Ascending aorta (tissue), 2 donors: ENCODE measurements at regions of chr4 and their contacts with region 1.

Region 1: GRCh38 chr4:2536193-2537010 is at the start of gene FAM193A:
- DNase-seq: peak; percentile 98 to 100
- H3K4me3 ChIP-seq: peak within 1 kb of the TSS; percentile 97 to 100
- H3K27ac ChIP-seq: peak within 1 kb of the TSS; percentile 89 to 97
- H3K4me1 ChIP-seq: peaks cover 15 to 16% of the 10 kb centered on the region in 2 donors
- H3K27me3 ChIP-seq: no peaks in the 10 kb centered on the region
- CTCF ChIP-seq: no peak
- total RNA-seq, gene FAM193A: 30.9 TPM

Region 2: GRCh38 chr4:1856042-1856788 is 680.2 kb before region 1 on chr4 and contains the start of gene LETM1:
- intact Hi-C with region 1: loop called (anchors 10 kb)
- DNase-seq: peak; percentile 86 to 97
- H3K4me3 ChIP-seq: peak within 1 kb of the TSS; percentile 85 to 86
- H3K27ac ChIP-seq: peak within 1 kb of the TSS; percentile 78 to 82
- H3K4me1 ChIP-seq: peaks cover 0 to 10% of the 10 kb centered on the region in 2 donors
- H3K27me3 ChIP-seq: no peaks in the 10 kb centered on the region
- CTCF ChIP-seq: peak in 1 of 3 experiments; percentile 28
- total RNA-seq, gene LETM1: 37.7 TPM

Region 3: DNA sequence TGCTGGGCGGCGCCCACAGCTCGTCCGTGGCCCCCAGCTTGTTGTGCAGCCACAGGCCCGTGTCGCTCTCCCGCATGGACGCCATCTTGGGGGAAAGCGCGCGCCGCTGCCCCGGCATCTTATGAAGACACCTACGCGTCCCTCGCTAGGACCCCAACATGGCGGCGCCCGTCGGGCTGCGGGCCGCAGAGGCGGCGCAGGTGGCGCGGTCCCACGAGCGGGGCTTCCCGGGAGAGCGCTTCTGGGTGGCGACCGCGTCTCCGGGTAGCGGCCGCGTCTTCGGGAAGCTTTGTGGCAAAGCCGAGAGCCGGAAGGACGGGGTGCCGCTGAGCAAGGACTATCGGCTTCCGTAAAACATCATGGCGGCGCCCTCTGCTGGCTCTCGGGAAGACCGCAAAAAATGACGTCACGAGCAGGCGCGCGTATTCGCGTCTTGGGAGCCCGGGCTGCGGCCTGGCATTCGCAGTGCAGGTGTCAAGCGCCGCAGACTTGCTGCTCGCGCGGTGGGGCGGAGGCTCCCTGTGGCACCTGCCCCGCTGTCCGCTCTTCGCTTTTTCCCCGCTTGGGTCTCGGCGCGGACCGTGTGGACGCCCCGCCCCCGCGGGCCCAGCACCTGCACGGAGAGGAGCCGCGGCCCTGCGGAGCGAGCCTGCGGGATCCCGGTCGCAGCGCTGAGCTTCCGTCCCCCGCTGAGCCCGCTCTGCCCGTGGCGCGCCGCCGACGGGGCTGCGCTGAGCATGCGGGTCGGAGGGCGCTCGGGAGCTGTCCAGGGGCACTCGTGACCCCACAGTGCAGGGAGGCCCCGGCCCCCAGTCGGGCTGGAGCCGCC is 527.3 kb before region 1 on chr4 and contains the start of gene NELFA:
- intact Hi-C with region 1: loop called (anchors 5 kb)
- DNase-seq: peak; percentile 63 to 96
- H3K4me3 ChIP-seq: peak within 1 kb of the TSS; percentile 84 to 98
- H3K27ac ChIP-seq: peak within 1 kb of the TSS; percentile 96 to 98
- H3K4me1 ChIP-seq: peaks cover 0 to 2% of the 10 kb centered on the region in 2 donors
- H3K27me3 ChIP-seq: no peaks in the 10 kb centered on the region
- CTCF ChIP-seq: peak in 2 of 3 experiments; percentile 44 to 54
- total RNA-seq, gene NELFA: 11.9 TPM

Region 4: DNA sequence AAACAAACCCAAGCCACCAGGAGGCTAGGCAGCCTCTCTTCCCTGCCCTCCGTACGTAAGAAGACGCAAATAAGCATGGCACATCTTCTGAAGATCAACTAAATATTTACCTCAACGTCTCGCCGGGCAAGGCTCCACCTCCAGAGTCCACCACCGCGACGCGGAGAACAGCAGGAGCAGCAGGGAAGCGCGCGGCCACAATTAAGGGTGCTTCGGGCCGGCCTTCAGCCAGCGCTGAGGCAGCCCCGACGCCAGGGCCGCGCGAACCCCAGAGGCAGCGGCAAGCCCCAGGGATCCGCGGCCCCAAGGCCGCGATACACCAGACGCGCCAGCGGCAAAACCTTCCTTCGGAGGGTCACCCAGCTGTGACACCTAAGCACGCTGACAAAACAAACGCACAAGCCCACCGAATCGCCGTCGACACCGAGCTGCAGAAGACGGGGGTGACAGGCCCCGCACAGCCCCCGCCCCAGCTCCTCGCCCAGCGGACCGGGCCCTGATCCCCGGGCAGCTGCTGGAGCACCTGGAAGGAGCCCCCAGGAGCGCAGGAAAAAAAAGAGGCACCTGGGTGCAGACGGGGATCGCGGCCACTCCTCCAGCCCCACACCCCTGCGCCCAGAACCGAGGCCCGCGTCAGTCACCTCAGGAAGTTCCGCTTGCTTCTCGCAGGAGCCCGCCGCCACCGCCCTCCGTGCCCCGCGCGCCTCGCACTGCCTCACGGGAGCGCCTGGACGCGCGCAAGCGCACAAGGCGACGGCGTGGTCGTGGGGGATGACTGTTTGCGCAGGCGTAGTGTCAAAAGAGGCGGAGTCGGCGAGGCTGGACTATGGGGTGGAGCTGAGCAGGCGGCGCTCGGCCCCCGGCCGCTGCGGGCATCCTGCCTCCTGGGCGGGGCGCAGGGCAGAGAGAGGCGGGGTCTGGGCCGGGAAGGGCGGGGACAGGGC is 294.7 kb before region 1 on chr4 and contains the starts of genes HAUS3 and POLN:
- intact Hi-C with region 1: loop called (anchors 5 kb)
- DNase-seq: peak; percentile 90 to 99
- H3K4me3 ChIP-seq: peak within 1 kb of the TSS; percentile 65 to 97
- H3K27ac ChIP-seq: peak within 1 kb of the TSS; percentile 60 to 69
- H3K4me1 ChIP-seq: peaks cover 6 to 37% of the 10 kb centered on the region in 2 donors
- H3K27me3 ChIP-seq: no peaks in the 10 kb centered on the region
- CTCF ChIP-seq: no peak
- total RNA-seq, gene HAUS3: 9.0 TPM
- total RNA-seq, gene POLN: 0.21 TPM

Region 5: DNA sequence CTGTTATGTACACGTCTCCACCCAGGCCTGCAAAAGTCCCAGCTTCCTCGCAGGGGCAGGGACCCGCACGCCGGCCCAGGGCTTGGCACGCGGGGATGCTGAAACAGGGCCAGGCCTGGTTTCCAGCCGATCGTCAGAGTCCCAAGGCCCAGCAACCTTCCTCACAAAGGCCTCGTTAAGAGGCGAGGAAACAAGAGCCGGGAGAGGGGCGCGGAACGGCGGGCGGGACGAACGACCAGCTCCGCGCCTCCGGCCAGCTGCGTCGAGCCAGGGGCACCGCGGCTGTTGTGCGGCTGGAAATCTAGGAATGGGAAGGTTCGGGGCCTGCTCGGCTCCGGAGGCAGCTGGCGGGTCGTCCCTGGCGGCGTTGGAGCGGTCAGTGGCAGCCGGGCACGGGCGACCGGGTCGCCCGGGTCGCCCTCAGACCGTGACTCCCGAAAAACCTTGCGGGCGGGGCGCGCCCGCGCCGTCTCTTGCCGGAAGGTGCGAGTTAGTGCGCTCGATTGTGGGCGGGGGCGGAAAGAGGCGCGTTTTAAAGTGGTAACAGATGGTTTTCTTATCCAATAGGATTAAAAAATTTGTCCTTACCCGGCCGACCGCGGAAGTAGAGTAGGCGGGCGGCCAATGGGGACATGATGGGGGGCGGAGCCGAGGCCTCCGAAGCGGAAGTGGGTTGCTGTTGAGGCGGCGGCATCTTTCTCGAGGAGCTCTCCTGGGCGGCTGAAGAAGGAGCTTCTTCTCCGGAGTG is 67.8 kb before region 1 on chr4 and contains the start of gene RNF4:
- intact Hi-C with region 1: loop called (anchors 1 kb)
- DNase-seq: peak; percentile 86 to 98
- H3K4me3 ChIP-seq: peak within 1 kb of the TSS; percentile 84 to 95
- H3K27ac ChIP-seq: peak within 1 kb of the TSS; percentile 81 to 91
- H3K4me1 ChIP-seq: peaks cover 3 to 18% of the 10 kb centered on the region in 2 donors
- H3K27me3 ChIP-seq: no peaks in the 10 kb centered on the region
- CTCF ChIP-seq: no peak
- total RNA-seq, gene RNF4: 19.3 TPM

Region 6: DNA sequence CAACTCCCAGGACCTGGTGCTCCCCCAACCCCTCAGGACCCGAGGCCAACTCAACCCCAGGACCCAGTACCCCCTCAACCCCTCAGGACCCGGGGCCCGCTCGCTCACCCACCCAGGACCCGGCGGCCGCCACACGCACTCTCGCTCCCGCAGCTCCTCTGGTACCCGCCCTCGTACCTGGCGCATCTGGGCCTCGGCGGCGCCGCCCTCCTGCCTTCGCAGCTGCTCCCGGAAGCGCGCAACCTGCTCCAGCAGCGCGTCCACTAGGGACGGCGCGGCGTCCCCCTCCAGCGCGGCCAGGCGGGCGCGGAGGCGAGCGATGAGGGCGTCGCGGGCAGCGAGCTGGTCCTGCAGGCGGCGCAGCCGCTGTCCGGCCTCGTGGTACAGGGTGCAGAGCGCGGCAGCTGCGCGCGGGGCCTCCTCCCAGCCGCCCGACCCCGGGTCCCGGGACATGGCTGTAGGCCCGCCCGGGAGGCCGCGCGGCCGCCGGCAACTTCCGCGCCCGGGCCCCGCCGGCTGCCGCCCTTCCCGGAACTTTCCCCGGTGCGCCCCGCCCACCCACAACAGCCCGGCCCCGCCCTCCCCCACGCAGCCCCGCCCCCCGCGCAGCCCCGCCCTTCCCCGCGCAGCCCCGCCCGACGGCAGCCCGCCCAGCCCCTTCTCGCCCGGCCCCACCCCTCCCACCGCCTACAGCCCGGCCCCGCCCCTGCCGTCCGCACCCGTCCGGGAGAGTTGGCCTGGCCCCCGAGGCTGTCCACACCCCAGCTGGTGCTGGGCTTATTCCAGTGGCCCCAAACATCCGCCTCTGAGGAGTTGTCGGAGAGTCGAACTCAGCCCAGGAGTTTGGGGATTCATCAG is 219.7 kb after region 1 on chr4 and contains the start of gene TNIP2:
- intact Hi-C with region 1: loop called (anchors 5 kb)
- DNase-seq: peak in 1 of 2 donors; percentile 92
- H3K4me3 ChIP-seq: peak within 1 kb of the TSS; percentile 90 to 95
- H3K27ac ChIP-seq: peak within 1 kb of the TSS; percentile 82 to 87
- H3K4me1 ChIP-seq: peaks cover 4 to 10% of the 10 kb centered on the region in 2 donors
- H3K27me3 ChIP-seq: no peaks in the 10 kb centered on the region
- CTCF ChIP-seq: peak; percentile 11 to 59 (median 28)
- total RNA-seq, gene TNIP2: 65.6 TPM

Region 7: DNA sequence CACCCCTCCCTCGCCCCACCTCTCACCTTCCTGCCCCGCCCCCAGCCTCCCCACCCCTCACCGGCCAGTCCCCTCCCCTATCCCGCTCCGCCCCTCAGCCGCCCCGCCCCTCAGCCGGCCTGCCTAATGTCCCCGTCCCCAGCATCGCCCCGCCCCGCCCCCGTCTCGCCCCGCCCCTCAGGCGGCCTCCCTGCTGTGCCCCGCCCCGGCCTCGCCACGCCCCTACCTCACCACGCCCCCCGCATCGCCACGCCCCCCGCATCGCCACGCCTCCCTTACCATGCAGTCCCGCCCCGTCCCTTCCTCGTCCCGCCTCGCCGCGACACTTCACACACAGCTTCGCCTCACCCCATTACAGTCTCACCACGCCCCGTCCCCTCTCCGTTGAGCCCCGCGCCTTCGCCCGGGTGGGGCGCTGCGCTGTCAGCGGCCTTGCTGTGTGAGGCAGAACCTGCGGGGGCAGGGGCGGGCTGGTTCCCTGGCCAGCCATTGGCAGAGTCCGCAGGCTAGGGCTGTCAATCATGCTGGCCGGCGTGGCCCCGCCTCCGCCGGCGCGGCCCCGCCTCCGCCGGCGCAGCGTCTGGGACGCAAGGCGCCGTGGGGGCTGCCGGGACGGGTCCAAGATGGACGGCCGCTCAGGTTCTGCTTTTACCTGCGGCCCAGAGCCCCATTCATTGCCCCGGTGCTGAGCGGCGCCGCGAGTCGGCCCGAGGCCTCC is 537.8 kb after region 1 on chr4 and contains the starts of genes HTT and HTT-AS:
- intact Hi-C with region 1: loop called (anchors 1 kb)
- DNase-seq: peak; percentile 80 to 97
- H3K4me3 ChIP-seq: peak within 1 kb of the TSS; percentile 95 to 99
- H3K27ac ChIP-seq: peak within 1 kb of the TSS; percentile 86 to 98
- H3K4me1 ChIP-seq: peaks cover 12 to 14% of the 10 kb centered on the region in 2 donors
- H3K27me3 ChIP-seq: no peaks in the 10 kb centered on the region
- CTCF ChIP-seq: no peak
- total RNA-seq, gene HTT: 23.7 TPM
- total RNA-seq, gene HTT-AS: not detected